Mammary epithelial cell (primary cell): ENCODE measurements at regions of chr19 and their contacts with region 1.

Region 1: DNA sequence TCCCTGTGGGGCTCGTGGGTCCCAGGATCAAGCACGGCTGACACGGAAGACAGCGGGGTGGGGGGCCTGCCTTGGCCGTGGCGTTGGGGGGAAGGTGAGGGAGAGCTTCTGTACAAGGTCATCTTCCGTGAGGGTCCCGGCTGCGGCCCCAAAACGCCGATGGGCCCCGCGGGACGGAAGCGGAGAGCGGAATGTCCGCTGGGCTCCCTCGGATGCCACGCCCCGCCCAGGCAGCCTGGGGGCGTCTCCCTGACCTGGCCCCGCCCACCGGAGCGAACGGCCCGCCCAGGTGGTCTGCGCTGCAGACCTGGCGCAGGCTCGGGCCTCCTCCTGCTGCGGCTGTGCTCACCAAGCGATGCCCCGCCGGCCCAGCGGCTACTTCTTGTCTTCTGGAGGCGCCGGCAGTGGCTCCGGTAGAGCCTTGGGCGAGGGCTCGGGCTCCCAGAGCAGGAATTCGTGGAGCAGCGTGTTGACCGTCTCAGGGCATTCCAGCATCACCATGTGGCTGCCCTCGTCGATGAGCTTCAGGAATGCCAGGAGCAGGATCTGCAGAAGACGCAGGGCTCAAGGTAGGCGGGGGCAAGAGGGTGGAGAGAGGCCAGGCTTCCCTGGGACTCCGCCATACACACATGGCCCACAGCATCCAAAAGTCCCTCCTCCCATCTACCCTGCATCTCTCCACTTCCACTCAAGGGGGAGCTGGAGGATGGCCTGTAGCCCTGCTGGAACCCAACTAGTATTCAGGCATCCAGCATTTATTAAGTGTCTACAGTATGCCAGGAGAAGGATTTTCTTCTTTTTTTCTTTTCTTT is 10.7 kb downstream of the ABHD8 start:
- DNase-seq: peak; percentile 87
- H3K4me3 ChIP-seq: peak overlapping the region; percentile 46 to 65 (median 59)
- H3K27ac ChIP-seq: no peak overlapping the region
- H3K4me1 ChIP-seq: peaks cover 30% of the 10 kb centered on the region
- H3K27me3 ChIP-seq: no peaks in the 10 kb centered on the region
- CTCF ChIP-seq: peak; percentile 87 to 94

Region 2: DNA sequence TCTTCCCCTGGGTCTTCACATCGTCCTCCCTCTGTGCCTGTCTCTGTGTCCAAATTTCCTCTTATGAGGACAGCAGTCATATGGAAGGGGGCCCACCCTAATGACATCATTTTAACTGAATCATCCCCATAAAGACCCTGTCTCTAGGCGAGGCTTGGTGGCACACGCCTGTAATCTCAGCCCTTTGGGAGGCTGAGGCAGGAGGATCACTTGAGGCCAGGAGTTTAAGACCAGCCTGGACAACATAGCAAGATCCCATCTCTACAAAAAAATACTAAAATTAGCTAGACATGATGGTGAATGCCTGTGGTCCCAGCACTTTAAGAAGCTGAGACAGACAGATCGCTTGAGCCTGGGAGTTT is 212.1 kb before region 1 on chr19:
- CTCF ChIA-PET with region 1: no interaction called
- dilution Hi-C with region 1: no loop called
- in situ Hi-C with region 1: no loop called
- intact Hi-C with region 1: no loop called
- DNase-seq: no peak
- H3K4me3 ChIP-seq: no peak overlapping the region
- H3K27ac ChIP-seq: peak overlapping the region; percentile 63
- H3K4me1 ChIP-seq: peaks cover 18% of the 10 kb centered on the region
- H3K27me3 ChIP-seq: no peaks in the 10 kb centered on the region
- CTCF ChIP-seq: no peak

Region 3: GRCh38 chr19:17235618-17236377 is 56.7 kb before region 1 on chr19:
- CTCF ChIA-PET with region 1: no interaction called
- dilution Hi-C with region 1: no loop called
- in situ Hi-C with region 1: no loop called
- intact Hi-C with region 1: no loop called
- DNase-seq: peak; percentile 61
- H3K4me3 ChIP-seq: peak overlapping the region; percentile 39 to 67 (median 58)
- H3K27ac ChIP-seq: no peak overlapping the region
- H3K4me1 ChIP-seq: peaks cover 16% of the 10 kb centered on the region
- H3K27me3 ChIP-seq: no peaks in the 10 kb centered on the region
- CTCF ChIP-seq: peak; percentile 7 to 54

Region 4: GRCh38 chr19:17305517-17306284 is 13.2 kb after region 1 on chr19 and contains the start of gene MRPL34:
- CTCF ChIA-PET with region 1: interaction called, 24 read pairs
- dilution Hi-C with region 1: no loop called
- in situ Hi-C with region 1: no loop called
- intact Hi-C with region 1: loop called (anchors 1 kb)
- DNase-seq: peak; percentile 100
- H3K4me3 ChIP-seq: peak within 1 kb of the TSS; percentile 57 to 90 (median 80)
- H3K27ac ChIP-seq: peak within 1 kb of the TSS; percentile 56
- H3K4me1 ChIP-seq: peaks cover 43% of the 10 kb centered on the region
- H3K27me3 ChIP-seq: no peaks in the 10 kb centered on the region
- CTCF ChIP-seq: peak; percentile 61 to 91
- total RNA-seq, gene MRPL34: 36.7 to 76.3 TPM

Region 5: DNA sequence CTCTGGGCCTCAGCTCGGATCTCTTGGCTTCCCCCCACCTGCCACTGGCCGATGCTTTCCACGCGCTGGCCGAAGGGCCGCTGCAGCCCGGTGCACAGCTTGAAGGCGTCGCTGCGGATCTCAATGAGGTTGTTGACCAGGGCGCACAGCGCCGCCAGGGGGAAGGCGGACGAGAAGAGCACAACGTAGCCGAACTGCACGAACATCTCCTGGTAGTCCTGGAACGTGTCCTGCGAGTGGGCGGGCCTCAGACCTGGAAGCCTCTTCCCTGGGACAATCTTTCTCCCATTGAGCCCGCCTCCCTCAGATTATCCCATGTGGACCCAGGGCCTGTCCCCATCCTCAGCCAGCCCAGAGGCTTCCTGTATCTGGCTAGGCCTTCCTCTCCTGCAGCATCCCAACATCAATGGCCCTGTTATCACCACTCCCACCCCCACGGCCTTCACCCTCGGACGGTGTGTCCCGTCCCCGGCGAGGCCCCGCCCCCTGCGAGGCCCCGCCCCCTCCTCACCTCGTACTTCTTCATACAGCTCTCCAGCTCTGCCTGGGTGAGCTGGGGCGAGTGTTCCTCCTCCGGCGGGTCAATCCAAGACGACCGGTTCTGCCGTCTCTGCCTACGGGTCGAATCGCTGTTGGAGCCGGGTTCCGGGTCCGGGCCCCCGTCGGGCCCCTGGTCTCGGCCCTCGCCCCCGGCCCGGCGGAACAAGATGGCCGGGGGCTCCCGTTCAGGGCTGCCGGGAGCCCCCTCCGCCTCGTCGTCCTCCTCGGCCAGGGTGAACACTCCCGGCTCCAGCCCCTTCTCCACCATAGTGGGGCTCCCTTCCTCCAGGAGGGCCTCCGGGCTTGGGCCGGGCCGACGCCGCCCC is 35.4 kb after region 1 on chr19:
- CTCF ChIA-PET with region 1: no interaction called
- dilution Hi-C with region 1: no loop called
- in situ Hi-C with region 1: no loop called
- intact Hi-C with region 1: loop called (anchors 2 kb)
- DNase-seq: peak; percentile 73
- H3K4me3 ChIP-seq: peak overlapping the region; percentile 43 to 51 (median 45)
- H3K27ac ChIP-seq: peak overlapping the region; percentile 19
- H3K4me1 ChIP-seq: peaks cover 48% of the 10 kb centered on the region
- H3K27me3 ChIP-seq: no peaks in the 10 kb centered on the region
- CTCF ChIP-seq: peak; percentile 65 to 86

Region 6: GRCh38 chr19:17336872-17337722 is 44.6 kb after region 1 on chr19 and contains the start of gene GTPBP3:
- CTCF ChIA-PET with region 1: no interaction called
- dilution Hi-C with region 1: no loop called
- in situ Hi-C with region 1: no loop called
- intact Hi-C with region 1: loop called (anchors 2 kb)
- DNase-seq: peak; percentile 99
- H3K4me3 ChIP-seq: peak within 1 kb of the TSS; percentile 69 to 87 (median 73)
- H3K27ac ChIP-seq: peak within 1 kb of the TSS; percentile 69
- H3K4me1 ChIP-seq: peaks cover 27% of the 10 kb centered on the region
- H3K27me3 ChIP-seq: no peaks in the 10 kb centered on the region
- CTCF ChIP-seq: no peak
- total RNA-seq, gene GTPBP3: 17.5 to 35.3 TPM

Region 7: GRCh38 chr19:17775245-17775916 is 482.9 kb after region 1 on chr19:
- CTCF ChIA-PET with region 1: no interaction called
- dilution Hi-C with region 1: no loop called
- in situ Hi-C with region 1: no loop called
- intact Hi-C with region 1: loop called (anchors 5 kb)
- DNase-seq: no peak
- H3K4me3 ChIP-seq: no peak overlapping the region
- H3K27ac ChIP-seq: no peak overlapping the region
- H3K4me1 ChIP-seq: peaks cover 10% of the 10 kb centered on the region
- H3K27me3 ChIP-seq: no peaks in the 10 kb centered on the region
- CTCF ChIP-seq: peak; percentile 68 to 74